IMR-90 (cell line): ENCODE measurements at regions of chr6 and their contacts with region 1.

Region 1: DNA sequence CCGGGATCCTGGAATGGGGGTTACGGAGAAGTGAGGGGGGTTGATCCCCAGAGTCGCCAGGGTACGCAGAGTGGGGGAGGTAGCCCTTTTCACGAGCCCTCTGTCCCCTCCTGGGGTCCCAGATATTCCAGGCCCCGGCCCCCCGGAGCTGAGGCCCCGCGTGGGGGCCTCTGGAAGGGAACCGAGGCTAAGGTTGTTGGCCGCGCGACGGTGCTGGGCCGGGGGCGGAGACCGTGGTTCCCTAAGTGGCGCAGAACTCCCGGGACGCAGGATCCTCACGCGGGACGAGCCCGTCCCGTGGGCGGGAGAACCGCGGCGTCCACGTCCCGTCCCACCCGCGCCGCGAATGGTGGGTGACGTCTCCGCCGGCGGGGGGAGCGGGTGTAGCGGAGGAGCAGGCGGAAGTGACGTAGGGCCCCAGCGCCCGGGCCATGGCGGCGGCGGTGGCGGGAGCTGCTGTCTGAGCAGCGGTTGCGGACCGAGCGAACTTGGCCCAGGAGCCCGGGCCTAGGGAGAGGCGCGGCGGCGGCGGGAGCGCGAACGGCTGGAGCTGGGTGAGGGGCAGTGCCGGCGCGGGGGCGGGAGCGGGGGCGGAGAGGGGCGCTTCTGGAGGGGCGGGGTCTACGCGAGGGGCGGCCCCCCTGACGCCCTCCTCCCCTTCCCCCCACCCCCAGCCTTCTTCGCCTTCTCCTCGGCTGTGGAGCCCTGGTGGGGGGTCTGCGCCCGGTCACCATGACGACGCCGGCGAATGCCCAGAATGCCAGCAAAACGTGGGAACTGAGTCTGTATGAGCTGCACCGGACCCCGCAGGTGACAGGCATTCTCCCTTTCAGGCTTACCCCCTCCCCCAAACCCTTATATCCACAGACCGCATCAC is at the start of gene RING1:
- DNase-seq: peak; percentile 67
- ATAC-seq: peak; percentile 58
- H3K4me3 ChIP-seq: peak within 1 kb of the TSS; percentile 90
- H3K27ac ChIP-seq: peak within 1 kb of the TSS; percentile 94
- H3K4me1 ChIP-seq: peaks cover 25% of the 10 kb centered on the region
- H3K27me3 ChIP-seq: no peaks in the 10 kb centered on the region
- CTCF ChIP-seq: no peak
- POLR2A ChIP-seq: peak; percentile 86
- RAD21 ChIP-seq: no peak
- total RNA-seq, gene RING1: 14.9 and 16.4 TPM in 2 replicates

Region 2: GRCh38 chr6:33410050-33410710 is 201.9 kb after region 1 on chr6:
- CTCF ChIA-PET with region 1: no interaction called
- POLR2A ChIA-PET with region 1: no interaction called
- dilution Hi-C with region 1: no loop called
- in situ Hi-C with region 1: no loop called
- intact Hi-C with region 1: loop called (anchors 2 kb)
- DNase-seq: peak; percentile 97
- ATAC-seq: peak; percentile 84
- H3K4me3 ChIP-seq: peak overlapping the region; percentile 92
- H3K27ac ChIP-seq: peak overlapping the region; percentile 100
- H3K4me1 ChIP-seq: no peaks in the 10 kb centered on the region; the same call in 1 of the 2 replicates
- H3K27me3 ChIP-seq: no peaks in the 10 kb centered on the region
- CTCF ChIP-seq: no peak
- POLR2A ChIP-seq: peak; percentile 69; the same call in 1 of the 2 replicates
- RAD21 ChIP-seq: no peak